GM18951 (cell line): ENCODE measurements at regions of chr2 and their contacts with region 1.

Region 1: GRCh38 chr2:172102391-172103278 is at the start of gene DLX2:
- POLR2A ChIP-seq: peak; percentile 61

Region 2: GRCh38 chr2:170928824-170929685 is 1173.6 kb before region 1 on chr2 and contains the start of gene GORASP2:
- in situ Hi-C with region 1: loop called (anchors 25 kb)
- POLR2A ChIP-seq: peak; percentile 95

Region 3: DNA sequence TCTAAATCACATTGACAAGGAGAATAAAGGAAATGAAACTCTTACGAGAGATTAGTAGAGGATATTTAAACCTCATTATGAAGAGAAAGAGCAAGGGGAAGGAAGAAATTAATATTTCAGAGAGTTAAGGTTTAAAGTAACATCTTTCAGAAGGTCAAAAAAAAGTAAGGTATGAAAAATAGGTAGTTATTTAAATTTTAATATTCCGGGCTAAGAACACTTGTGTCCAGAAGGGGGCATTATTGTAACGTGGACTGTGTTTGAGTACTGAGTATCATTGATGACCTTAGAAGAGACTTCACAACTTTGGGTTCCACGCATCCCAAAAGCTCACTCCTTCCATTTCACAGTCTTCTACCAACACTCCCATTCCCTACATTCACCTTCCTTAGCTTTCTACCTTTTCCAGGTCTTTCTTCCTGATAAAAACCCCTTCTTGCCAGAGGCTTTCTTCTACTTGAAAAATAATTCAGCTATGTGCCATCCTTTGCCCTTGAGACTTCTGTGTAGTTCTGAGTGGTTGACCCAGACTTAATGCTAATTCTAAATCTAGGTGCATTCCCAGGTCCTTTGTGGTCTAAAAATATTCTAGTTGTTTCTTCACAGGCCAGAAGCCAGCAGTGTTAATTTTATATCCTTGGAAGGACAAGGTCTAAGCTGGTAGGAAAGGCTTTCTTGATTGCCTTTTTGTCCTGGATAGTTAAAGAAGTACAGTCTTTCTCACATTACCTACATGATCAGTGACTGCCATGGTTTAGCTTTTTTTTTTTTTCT is 398.9 kb before region 1 on chr2:
- in situ Hi-C with region 1: loop called (anchors 10 kb)
- POLR2A ChIP-seq: no peak

Region 4: GRCh38 chr2:171811245-171811628 is 291.4 kb before region 1 on chr2:
- in situ Hi-C with region 1: loop called (anchors 25 kb)
- POLR2A ChIP-seq: no peak

Region 5: DNA sequence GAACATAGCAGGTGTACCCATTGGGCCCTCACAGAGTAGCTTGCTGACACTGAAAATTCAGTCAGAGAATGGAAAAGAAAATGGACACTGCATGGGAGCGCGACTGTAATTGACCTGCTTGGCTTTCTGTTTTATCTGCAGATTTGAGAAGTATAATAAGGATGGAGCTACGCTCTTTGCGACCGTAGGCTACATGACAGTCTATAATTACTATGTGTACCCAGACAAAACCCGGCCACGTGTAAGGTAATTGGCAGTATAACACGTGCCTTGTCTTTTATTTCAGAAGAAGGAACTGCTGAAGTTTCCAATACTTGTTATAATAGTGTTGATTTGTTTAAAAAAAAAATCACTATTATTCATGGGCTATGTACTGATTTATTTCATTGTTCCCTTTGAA is 136.4 kb before region 1 on chr2:
- in situ Hi-C with region 1: no loop called
- POLR2A ChIP-seq: no peak